Mammary epithelial cell (primary cell): ENCODE measurements at regions of chr21 and their contacts with region 1.

Region 1: DNA sequence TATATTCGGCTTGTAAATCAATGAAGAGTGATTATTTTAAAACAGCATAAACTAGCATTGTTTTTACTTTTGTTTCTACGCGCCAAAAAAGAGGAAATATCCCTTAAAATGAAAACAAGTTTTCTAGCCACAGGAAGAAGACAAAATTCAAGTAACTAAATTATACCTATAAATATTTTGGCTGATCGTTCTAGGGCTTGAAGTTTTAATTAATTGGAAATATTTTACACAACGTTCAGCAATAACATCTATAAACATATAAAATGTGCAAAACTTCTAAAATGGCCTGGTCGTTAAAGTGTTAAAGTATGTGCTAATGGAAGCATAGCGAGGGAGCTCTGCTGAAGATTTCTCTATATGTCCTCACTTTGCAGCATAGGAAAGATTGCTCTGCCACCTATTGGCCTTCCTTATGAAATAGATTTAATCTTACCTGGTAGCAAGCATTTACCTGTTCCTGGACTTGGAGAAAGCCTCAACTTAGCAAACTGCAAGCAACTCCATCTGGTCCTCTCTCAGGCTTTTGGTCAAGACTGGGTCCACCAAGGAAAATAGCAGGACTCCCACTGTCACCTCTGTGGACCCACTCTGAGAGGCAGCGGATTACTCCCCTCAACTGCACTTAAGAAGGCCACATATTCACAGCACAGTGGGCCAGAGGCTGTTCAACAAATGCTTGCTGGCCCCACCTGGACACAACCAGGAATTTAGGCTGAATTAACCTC is 351.3 kb upstream of the RUNX1 start:
- DNase-seq: peak; percentile 81
- H3K4me3 ChIP-seq: peak overlapping the region in 1 of 3 experiments; percentile 30
- H3K27ac ChIP-seq: peak overlapping the region; percentile 80
- H3K4me1 ChIP-seq: peaks cover 36% of the 10 kb centered on the region
- H3K27me3 ChIP-seq: no peaks in the 10 kb centered on the region
- CTCF ChIP-seq: peak; percentile 57 to 69

Region 2: GRCh38 chr21:34693192-34693810 is 707.1 kb before region 1 on chr21:
- CTCF ChIA-PET with region 1: interaction called, 4 read pairs
- dilution Hi-C with region 1: no loop called
- in situ Hi-C with region 1: loop called in 1 of 2 experiments (anchors 25 kb)
- intact Hi-C with region 1: loop called (anchors 2 kb)
- DNase-seq: peak; percentile 39
- H3K4me3 ChIP-seq: no peak overlapping the region
- H3K27ac ChIP-seq: no peak overlapping the region
- H3K4me1 ChIP-seq: peaks cover 6% of the 10 kb centered on the region
- H3K27me3 ChIP-seq: no peaks in the 10 kb centered on the region
- CTCF ChIP-seq: peak; percentile 83 to 92

Region 3: GRCh38 chr21:35138665-35139381 is 261.6 kb before region 1 on chr21:
- CTCF ChIA-PET with region 1: no interaction called
- dilution Hi-C with region 1: no loop called
- in situ Hi-C with region 1: loop called in 1 of 2 experiments (anchors 10 kb)
- intact Hi-C with region 1: loop called (anchors 1 kb)
- DNase-seq: peak; percentile 100
- H3K4me3 ChIP-seq: no peak overlapping the region
- H3K27ac ChIP-seq: peak overlapping the region; percentile 99
- H3K4me1 ChIP-seq: peaks cover 45% of the 10 kb centered on the region
- H3K27me3 ChIP-seq: no peaks in the 10 kb centered on the region
- CTCF ChIP-seq: peak; percentile 26 to 51

Region 4: GRCh38 chr21:35256467-35256988 is 143.9 kb before region 1 on chr21:
- CTCF ChIA-PET with region 1: no interaction called
- dilution Hi-C with region 1: no loop called
- in situ Hi-C with region 1: no loop called
- intact Hi-C with region 1: loop called (anchors 1 kb)
- DNase-seq: peak; percentile 99
- H3K4me3 ChIP-seq: peak overlapping the region; percentile 3 to 31 (median 7)
- H3K27ac ChIP-seq: peak overlapping the region; percentile 98
- H3K4me1 ChIP-seq: peaks cover 17% of the 10 kb centered on the region
- H3K27me3 ChIP-seq: no peaks in the 10 kb centered on the region
- CTCF ChIP-seq: peak in 1 of 2 donors; percentile 16

Region 5: DNA sequence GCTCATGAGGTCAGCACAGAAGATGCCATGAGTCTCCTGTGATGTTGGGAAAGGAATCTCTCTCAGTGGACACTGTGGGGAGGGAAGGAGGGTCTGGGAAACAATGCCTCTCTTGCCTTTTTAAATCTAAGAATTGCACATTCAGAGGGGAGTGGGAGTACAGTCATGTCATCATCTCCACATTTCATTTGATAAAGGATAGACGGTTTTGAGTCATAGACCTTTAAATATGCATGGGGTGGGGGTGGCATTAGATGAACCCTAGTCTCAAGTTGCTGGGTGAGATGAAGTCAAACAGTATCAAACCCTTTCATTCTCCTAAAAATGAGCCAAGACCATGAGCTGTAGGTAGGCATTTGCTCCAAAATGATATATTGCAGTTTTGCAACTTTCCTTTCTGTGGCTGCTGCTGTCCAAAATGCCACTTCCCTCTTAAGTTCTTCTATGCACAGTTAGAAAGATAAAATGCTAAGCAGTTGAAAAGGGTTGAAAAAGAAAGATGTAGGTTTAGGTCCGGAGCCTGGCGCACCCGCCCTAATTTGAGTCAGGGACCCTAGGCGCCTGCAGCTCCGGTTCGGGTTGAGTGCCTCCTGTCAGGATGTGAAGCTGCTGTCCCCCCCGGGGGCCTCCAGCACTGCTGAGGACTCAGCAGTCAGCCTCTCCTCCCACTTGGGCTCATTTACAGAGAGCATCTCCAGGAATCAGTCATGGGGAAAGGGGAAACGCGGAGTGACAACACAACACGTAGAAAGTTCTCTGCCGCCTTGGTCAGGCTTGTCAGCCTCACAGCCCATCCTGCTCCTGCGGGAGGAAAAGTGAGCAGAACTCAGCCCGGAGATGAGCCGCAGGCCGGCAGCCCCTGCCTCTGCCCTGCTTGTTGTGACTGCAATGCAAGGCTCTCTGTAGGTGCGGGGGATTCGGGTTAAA is 128.0 kb after region 1 on chr21:
- CTCF ChIA-PET with region 1: no interaction called
- dilution Hi-C with region 1: no loop called
- in situ Hi-C with region 1: no loop called
- intact Hi-C with region 1: no loop called
- DNase-seq: no peak
- H3K4me3 ChIP-seq: no peak overlapping the region
- H3K27ac ChIP-seq: no peak overlapping the region
- H3K4me1 ChIP-seq: peaks cover 19% of the 10 kb centered on the region
- H3K27me3 ChIP-seq: no peaks in the 10 kb centered on the region
- CTCF ChIP-seq: no peak

Region 6: GRCh38 chr21:35616090-35616489 is 215.7 kb after region 1 on chr21:
- CTCF ChIA-PET with region 1: no interaction called
- dilution Hi-C with region 1: no loop called
- in situ Hi-C with region 1: loop called in 1 of 2 experiments (anchors 25 kb)
- intact Hi-C with region 1: loop called (anchors 1 kb)
- DNase-seq: peak; percentile 40
- H3K4me3 ChIP-seq: no peak overlapping the region
- H3K27ac ChIP-seq: peak overlapping the region; percentile 25
- H3K4me1 ChIP-seq: peaks cover 54% of the 10 kb centered on the region
- H3K27me3 ChIP-seq: no peaks in the 10 kb centered on the region
- CTCF ChIP-seq: peak; percentile 50 to 59

Region 7: DNA sequence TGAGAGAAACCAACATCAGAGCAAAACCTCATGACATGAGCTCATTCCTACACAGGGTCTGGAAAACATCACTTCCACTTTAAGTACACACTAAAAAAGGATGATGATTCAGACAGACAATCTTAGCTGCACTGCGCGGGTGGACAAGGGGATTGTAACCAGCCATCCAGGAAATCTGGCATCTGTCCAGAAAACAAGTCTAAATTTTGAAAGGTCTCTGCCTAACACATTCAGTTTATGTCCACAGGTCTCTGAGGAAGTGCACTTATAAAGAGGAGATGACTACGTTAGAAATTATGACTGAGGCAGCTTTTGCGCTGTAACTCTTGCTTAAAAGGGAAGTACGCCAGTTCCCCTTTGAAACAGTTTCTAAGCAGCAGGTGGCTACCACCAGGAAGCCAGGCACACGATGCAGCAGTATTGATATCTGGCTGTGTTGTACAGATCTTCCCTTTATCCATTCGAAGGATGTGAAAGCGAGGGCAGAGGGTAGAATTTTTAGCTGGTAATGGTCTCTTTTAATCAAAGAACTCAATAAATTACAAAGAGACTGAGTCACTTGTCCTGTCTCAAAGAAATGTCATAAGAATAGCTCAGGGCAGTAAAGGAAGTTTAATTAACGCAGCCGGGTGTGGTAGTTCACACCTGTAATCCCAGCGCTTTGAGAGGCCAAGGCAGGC is 532.0 kb after region 1 on chr21:
- CTCF ChIA-PET with region 1: no interaction called
- dilution Hi-C with region 1: no loop called
- in situ Hi-C with region 1: loop called in 1 of 2 experiments (anchors 25 kb)
- intact Hi-C with region 1: no loop called
- DNase-seq: peak; percentile 92
- H3K4me3 ChIP-seq: no peak overlapping the region
- H3K27ac ChIP-seq: peak overlapping the region; percentile 46
- H3K4me1 ChIP-seq: peaks cover 19% of the 10 kb centered on the region
- H3K27me3 ChIP-seq: no peaks in the 10 kb centered on the region
- CTCF ChIP-seq: no peak